ENCODE measurements at regions of chr1 and their contacts with region 1.

Region 1: DNA sequence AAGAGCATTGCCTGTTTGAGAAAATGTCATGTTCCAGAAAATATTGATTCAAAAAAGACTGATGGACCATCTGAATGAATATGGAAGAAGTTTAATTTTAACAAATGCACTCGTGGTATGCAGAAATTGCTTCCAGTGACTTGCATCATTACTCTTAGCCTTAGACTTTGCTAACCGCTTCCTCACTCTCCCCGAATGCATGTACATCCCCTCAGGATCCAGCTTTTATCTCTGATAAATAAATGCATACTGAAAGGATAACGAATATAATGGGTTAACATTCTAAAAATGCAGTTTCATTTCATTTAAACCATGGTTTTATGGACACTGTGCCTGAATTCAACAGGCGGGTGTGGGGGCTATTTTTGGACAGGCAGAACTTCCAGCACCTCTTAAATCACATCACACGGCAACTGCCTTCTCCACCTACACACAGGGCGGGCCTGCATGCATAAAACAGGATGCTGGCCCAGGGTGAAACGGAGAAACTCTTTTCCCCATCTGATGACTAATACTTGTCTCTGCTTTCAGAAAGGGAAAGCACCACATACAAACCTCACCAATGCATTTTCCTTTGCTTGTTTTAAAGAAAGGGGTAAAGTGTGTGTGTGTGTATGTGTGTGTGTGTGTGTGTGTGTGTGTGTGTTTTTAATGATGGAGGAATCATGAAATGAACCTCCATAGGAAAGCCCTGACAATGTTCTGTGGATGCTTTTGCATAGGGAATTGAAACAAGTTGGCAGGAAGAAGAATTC is 48.7 kb downstream of the SPAG17 start:
- DNase-seq: peak; percentile 35

Region 2: GRCh38 chr1:118247593-118247992 is 111.2 kb after region 1 on chr1:
- in situ Hi-C with region 1: loop called (anchors 25 kb)
- DNase-seq: peak; percentile 26

Region 3: DNA sequence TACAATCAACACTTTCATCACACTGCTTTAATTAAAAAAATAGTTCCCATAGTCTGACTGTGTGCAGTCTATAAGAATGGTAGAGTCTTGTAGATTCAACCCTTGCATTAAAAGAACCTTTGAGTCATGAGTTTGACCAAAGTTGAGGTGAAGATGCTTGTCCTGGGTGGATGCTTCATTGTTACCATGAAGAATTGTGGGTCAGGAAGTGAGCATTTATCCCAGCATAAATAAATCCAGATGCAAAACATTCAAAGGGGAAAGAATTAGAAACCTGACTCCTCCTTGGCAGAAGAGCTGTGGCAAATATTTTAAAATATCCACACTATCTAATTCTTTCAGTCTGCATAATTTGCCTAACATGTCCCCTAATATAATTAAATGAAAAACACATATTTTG is 121.6 kb after region 1 on chr1:
- in situ Hi-C with region 1: no loop called
- DNase-seq: no peak

Measured in ACHN (cell line).